HCT116 (cell line): ENCODE measurements at regions of chr3 and their contacts with region 1.

Region 1: DNA sequence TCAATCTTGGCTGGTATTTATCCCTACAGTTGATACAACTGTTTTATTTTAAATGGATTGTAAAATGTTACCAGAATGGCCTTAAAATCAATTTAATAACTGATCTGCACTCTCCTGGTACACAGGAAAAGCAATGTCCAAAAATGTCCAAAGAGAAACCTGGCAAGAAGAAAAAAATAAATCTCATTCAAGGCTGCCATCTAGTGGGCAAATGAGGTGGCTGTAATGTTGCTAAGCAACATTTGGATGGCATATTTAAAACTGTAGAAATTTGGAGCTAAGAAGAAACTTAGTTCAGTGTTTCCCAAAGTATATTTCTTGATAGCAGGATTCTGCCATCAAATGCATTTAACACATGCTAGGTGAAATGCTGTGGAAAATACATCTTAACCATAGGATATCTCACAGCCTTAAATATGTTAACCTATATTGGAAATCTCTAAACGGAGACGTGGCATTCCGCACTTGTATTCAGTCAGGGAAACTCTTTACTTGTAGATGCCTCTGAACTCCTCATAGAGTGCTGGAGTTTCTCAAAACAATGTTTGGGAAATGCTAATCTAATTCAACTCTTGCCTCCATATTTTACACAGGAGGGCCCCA is 216.8 kb downstream of the ERC2 start:
- DNase-seq: peak; percentile 24
- ATAC-seq: peak; percentile 54; the same call in 1 of the 2 replicates
- H3K4me3 ChIP-seq: no peak overlapping the region
- H3K27ac ChIP-seq: no peak overlapping the region
- H3K4me1 ChIP-seq: no peaks in the 10 kb centered on the region
- H3K27me3 ChIP-seq: peaks cover 5% of the 10 kb centered on the region; the same call in 1 of the 2 replicates
- CTCF ChIP-seq: peak; percentile 30 to 87 (median 70); a peak in 5 of 6 replicates
- POLR2A ChIP-seq: no peak
- RAD21 ChIP-seq: peak; percentile 65

Region 2: DNA sequence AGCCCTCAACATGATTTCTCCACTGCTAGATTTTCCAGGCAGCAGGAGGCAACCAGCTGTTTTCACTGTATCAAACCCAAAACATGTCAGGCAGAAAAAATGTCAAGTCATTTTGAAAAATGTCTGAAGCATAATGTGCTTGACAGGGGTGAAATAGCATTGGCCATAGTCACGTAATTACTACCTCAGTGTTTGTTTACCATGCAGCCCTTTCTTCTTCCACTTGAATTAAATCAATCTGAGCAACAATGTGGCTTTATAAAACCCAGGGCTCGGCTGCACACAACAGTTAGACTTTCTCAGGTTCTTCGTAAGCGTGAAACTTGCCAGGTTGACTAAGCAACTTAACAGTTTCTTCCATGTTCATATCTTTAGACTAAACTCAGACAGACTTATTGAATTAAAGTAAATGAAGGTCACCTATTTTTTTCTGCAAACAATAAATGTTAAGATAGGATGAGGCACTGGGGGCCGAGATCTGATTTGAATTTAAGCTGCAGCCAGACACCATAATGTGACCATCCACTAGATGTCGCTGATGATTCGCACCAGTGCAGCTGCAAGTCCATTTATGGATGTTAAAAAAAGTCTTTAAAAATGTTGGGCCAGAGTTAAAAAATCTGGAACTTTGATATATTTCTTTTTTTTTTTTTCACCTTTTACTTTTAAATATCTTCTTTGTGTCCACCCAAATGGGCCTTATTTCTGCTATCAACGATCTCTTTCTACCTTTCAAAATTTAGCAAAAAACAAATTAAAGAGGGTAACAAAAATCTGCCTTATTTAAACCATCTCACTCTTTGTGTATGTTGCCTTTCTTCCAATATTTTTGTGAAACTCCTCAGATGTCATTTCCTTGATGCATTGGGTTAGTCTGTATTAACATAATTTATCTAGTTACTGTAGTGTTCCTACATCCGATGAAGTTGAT is 1823.2 kb before region 1 on chr3:
- CTCF ChIA-PET with region 1: interaction called, 3 read pairs
- POLR2A ChIA-PET with region 1: no interaction called
- RAD21 ChIA-PET with region 1: no interaction called
- intact Hi-C with region 1: loop called (anchors 1 kb)
- DNase-seq: peak; percentile 36
- ATAC-seq: peak; percentile 49; the same call in 1 of the 2 replicates
- H3K4me3 ChIP-seq: no peak overlapping the region
- H3K27ac ChIP-seq: no peak overlapping the region
- H3K4me1 ChIP-seq: no peaks in the 10 kb centered on the region
- H3K27me3 ChIP-seq: no peaks in the 10 kb centered on the region; the same call in 1 of the 2 replicates
- CTCF ChIP-seq: peak; percentile 31 to 80 (median 80); a peak in 5 of 6 replicates
- POLR2A ChIP-seq: no peak
- RAD21 ChIP-seq: peak; percentile 70

Region 3: DNA sequence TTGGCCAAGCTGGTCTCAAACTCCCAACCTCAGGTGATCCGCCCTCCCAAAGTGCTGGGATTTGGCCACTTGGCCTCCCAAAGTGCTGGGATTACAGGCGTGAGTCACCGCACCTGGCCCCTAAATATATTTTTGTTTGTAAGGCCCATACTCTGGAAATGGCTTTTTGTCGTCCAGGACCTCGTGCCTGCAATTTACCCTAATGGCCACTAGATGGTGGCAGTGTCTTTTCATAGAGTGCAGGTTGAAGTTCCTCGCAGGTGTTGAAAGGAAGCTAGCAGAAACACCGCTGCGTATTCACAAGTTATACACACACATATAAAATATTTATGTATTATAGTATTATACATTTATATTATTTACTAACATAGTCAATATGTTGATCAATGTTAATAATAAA is 1420.8 kb before region 1 on chr3:
- CTCF ChIA-PET with region 1: interaction called, 3 read pairs
- POLR2A ChIA-PET with region 1: no interaction called
- RAD21 ChIA-PET with region 1: no interaction called
- intact Hi-C with region 1: loop called (anchors 5 kb)
- DNase-seq: peak; percentile 16
- ATAC-seq: no peak
- H3K4me3 ChIP-seq: no peak overlapping the region
- H3K27ac ChIP-seq: no peak overlapping the region
- H3K4me1 ChIP-seq: no peaks in the 10 kb centered on the region
- H3K27me3 ChIP-seq: no peaks in the 10 kb centered on the region
- CTCF ChIP-seq: peak; percentile 27 to 71 (median 68); a peak in 5 of 6 replicates
- POLR2A ChIP-seq: no peak
- RAD21 ChIP-seq: peak; percentile 60

Region 4: GRCh38 chr3:54853573-54854404 is 1397.7 kb before region 1 on chr3:
- CTCF ChIA-PET with region 1: no interaction called
- POLR2A ChIA-PET with region 1: no interaction called
- RAD21 ChIA-PET with region 1: no interaction called
- intact Hi-C with region 1: loop called (anchors 2 kb)
- DNase-seq: no peak
- ATAC-seq: peak; percentile 77
- H3K4me3 ChIP-seq: no peak overlapping the region
- H3K27ac ChIP-seq: no peak overlapping the region
- H3K4me1 ChIP-seq: no peaks in the 10 kb centered on the region
- H3K27me3 ChIP-seq: no peaks in the 10 kb centered on the region
- CTCF ChIP-seq: peak; percentile 16 to 82 (median 58); a peak in 3 of 6 replicates
- POLR2A ChIP-seq: no peak
- RAD21 ChIP-seq: peak; percentile 57

Region 5: GRCh38 chr3:56291244-56291680 is 39.8 kb after region 1 on chr3:
- CTCF ChIA-PET with region 1: no interaction called
- POLR2A ChIA-PET with region 1: no interaction called
- RAD21 ChIA-PET with region 1: no interaction called
- intact Hi-C with region 1: no loop called
- DNase-seq: no peak
- ATAC-seq: no peak
- H3K4me3 ChIP-seq: no peak overlapping the region
- H3K27ac ChIP-seq: no peak overlapping the region
- H3K4me1 ChIP-seq: no peaks in the 10 kb centered on the region
- H3K27me3 ChIP-seq: peaks cover 25% of the 10 kb centered on the region
- CTCF ChIP-seq: no peak
- POLR2A ChIP-seq: no peak
- RAD21 ChIP-seq: no peak